ENCODE measurements at regions of chr1 and their contacts with region 1.

Region 1: DNA sequence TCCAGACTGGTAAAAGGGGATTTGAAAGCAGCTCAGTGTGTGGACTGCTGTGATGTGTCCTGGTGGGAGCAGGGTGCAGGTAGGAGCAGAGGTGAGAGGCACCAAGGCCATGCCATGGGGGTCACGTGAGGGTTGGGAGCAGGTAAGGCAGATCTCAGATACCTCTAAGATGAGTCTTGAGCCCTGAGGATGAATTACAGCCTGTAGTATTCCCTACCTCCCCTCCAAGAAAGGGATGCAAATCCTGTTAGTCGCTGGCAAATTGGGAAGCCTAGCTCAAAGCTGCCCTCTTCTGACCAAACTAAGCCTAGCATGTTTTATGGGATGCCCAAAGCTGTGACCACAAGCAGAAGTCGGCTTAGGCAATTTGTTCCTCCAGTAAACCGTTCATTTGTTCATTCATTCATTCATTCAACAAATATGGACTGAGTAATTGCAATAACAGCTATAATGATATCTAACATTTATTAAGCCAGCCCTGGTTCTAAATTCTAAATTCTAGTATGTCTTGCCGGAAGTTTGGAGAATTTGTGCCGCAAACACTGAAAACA is 3.9 kb upstream of the NUAK2 start:
- DNase-seq: peak in 1 of 2 donors; percentile 74
- ATAC-seq: peak in 2 of 8 donors; percentile 31 to 54
- H3K4me3 ChIP-seq: no peak overlapping the region
- H3K27ac ChIP-seq: no peak overlapping the region
- H3K4me1 ChIP-seq: peaks cover 0 to 24% (median 10%) of the 10 kb centered on the region in 9 donors
- H3K27me3 ChIP-seq: peaks cover 0 to 27% (median 16%) of the 10 kb centered on the region in 7 donors
- CTCF ChIP-seq: peak; percentile 75 to 91 (median 85)

Region 2: DNA sequence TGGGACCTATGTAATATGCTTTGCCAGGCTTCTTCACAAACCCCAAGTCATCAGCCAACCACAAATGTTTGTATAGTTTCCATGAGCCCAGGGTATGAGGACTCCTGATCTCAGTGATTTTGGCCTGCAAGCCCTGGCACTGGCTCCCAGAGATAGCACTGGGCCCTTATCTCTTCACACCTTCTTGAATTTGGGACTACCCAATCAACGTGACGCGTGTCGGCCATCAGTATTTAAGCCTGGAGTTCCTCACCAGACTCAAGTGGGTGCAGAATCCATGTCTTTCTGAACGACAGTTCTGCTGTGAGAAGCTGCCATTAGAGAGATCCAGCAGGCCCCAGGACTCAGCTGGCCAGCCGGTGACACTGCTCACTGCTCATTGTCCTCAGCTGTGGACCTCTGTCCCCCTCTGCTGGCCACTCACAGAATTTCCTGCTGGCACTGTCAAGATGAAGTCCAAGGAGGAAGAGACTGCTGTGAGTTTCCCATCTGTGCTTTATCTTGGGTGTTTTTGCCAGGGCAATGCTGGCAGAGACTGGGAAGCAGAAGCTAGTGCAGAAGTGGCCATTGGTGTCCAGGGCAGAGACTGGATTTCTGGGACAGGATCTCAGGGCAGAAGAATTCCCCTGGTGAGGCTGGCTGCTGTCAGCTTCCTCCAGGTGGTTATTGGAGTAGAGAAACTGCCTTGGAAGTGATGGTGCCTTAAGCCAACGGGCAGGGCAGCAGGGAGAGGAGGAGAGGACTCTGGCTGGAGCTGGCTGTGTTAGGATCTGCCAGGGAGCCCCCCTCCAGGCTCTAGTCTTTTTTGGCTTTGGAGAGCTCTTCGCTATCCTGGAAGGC is 69.2 kb before region 1 on chr1:
- intact Hi-C with region 1: no loop called
- DNase-seq: peak; percentile 90 to 91
- ATAC-seq: peak; percentile 86 to 94 (median 92)
- H3K4me3 ChIP-seq: no peak overlapping the region
- H3K27ac ChIP-seq: peak overlapping the region in 4 of 10 donors; percentile 6 to 45 (median 15)
- H3K4me1 ChIP-seq: peaks cover 28 to 49% (median 40%) of the 10 kb centered on the region in 9 donors
- H3K27me3 ChIP-seq: no peaks in the 10 kb centered on the region
- CTCF ChIP-seq: peak; percentile 92 to 99 (median 95)

Region 3: GRCh38 chr1:205273551-205273982 is 51.8 kb before region 1 on chr1:
- intact Hi-C with region 1: loop called (anchors 1 to 2 kb)
- DNase-seq: peak; percentile 81 to 82
- ATAC-seq: peak; percentile 43 to 89 (median 80)
- H3K4me3 ChIP-seq: no peak overlapping the region
- H3K27ac ChIP-seq: no peak overlapping the region
- H3K4me1 ChIP-seq: peaks cover 0 to 38% (median 18%) of the 10 kb centered on the region in 9 donors
- H3K27me3 ChIP-seq: no peaks in the 10 kb centered on the region
- CTCF ChIP-seq: peak; percentile 97 to 100 (median 99)